ENCODE measurements at regions of chr9 and their contacts with region 1.

Region 1: GRCh38 chr9:95510709-95511615 is 5.8 kb downstream of the PTCH1 start:
- DNase-seq: peak; percentile 51 to 92 (median 81)
- ATAC-seq: peak; percentile 32
- H3K4me3 ChIP-seq: peak overlapping the region; percentile 60 to 72
- H3K4me3 Mint-ChIP-seq: peak overlapping the region; percentile 93
- H3K27ac ChIP-seq: peak overlapping the region; percentile 45
- H3K27ac Mint-ChIP-seq: peak overlapping the region; percentile 79
- H3K4me1 ChIP-seq: peaks cover 26% of the 10 kb centered on the region
- H3K4me1 Mint-ChIP-seq: peaks cover 41% of the 10 kb centered on the region
- H3K27me3 ChIP-seq: no peaks in the 10 kb centered on the region
- H3K27me3 Mint-ChIP-seq: peaks cover 22% of the 10 kb centered on the region
- CTCF ChIP-seq: no peak

Region 2: GRCh38 chr9:95317119-95317892 is 193.7 kb before region 1 on chr9 and contains the start of gene FANCC:
- CTCF ChIA-PET with region 1: no interaction called
- POLR2A ChIA-PET with region 1: no interaction called
- intact Hi-C with region 1: loop called (anchors 1 to 2 kb)
- DNase-seq: peak; percentile 71 to 93 (median 85)
- ATAC-seq: peak; percentile 79
- H3K4me3 ChIP-seq: peak within 1 kb of the TSS; percentile 87 to 99
- H3K4me3 Mint-ChIP-seq: peak within 1 kb of the TSS; percentile 94
- H3K27ac ChIP-seq: peak within 1 kb of the TSS; percentile 75 to 78
- H3K27ac Mint-ChIP-seq: peak within 1 kb of the TSS; percentile 91
- H3K4me1 ChIP-seq: peaks cover 12% of the 10 kb centered on the region
- H3K4me1 Mint-ChIP-seq: peaks cover 22% of the 10 kb centered on the region
- H3K27me3 ChIP-seq: no peaks in the 10 kb centered on the region
- H3K27me3 Mint-ChIP-seq: peaks cover 4% of the 10 kb centered on the region
- CTCF ChIP-seq: no peak
- total RNA-seq, gene FANCC: 4.2 to 6.1 TPM

Region 3: GRCh38 chr9:95726756-95727155 is 215.8 kb after region 1 on chr9:
- CTCF ChIA-PET with region 1: interaction called, 3 read pairs
- POLR2A ChIA-PET with region 1: no interaction called
- intact Hi-C with region 1: loop called (anchors 2 kb)
- DNase-seq: peak in 2 of 9 experiments; percentile 39 to 55
- ATAC-seq: no peak
- H3K4me3 ChIP-seq: no peak overlapping the region
- H3K4me3 Mint-ChIP-seq: no peak overlapping the region
- H3K27ac ChIP-seq: no peak overlapping the region
- H3K27ac Mint-ChIP-seq: no peak overlapping the region
- H3K4me1 ChIP-seq: peaks cover 28% of the 10 kb centered on the region
- H3K4me1 Mint-ChIP-seq: peaks cover 47% of the 10 kb centered on the region
- H3K27me3 ChIP-seq: no peaks in the 10 kb centered on the region
- H3K27me3 Mint-ChIP-seq: peaks cover 2% of the 10 kb centered on the region
- CTCF ChIP-seq: peak; percentile 46

Region 4: DNA sequence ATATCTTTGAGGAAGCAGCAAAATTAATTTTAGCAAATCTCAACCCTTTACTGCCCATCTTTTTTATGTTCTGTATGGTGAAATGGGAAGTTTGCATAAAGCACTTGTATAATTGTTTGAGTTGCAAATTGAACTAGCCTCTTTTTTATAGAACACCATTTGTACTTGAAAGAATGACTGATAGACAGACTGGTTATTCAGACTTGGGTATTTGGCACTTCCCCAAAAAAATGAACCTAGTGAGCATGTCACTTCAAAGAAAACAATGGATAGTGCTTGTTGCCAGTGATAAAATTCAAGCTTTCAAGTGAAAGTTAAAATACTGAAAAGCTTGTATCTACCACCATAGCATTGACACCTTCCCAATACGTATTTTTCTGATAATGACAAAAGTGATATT is 480.4 kb after region 1 on chr9:
- CTCF ChIA-PET with region 1: no interaction called
- POLR2A ChIA-PET with region 1: no interaction called
- intact Hi-C with region 1: no loop called
- DNase-seq: no peak
- ATAC-seq: no peak
- H3K4me3 ChIP-seq: no peak overlapping the region
- H3K4me3 Mint-ChIP-seq: no peak overlapping the region
- H3K27ac ChIP-seq: no peak overlapping the region
- H3K27ac Mint-ChIP-seq: no peak overlapping the region
- H3K4me1 ChIP-seq: no peaks in the 10 kb centered on the region
- H3K4me1 Mint-ChIP-seq: peaks cover 4% of the 10 kb centered on the region
- H3K27me3 ChIP-seq: no peaks in the 10 kb centered on the region
- H3K27me3 Mint-ChIP-seq: no peaks in the 10 kb centered on the region
- CTCF ChIP-seq: no peak

Region 5: GRCh38 chr9:96217754-96218693 is 707.1 kb after region 1 on chr9:
- CTCF ChIA-PET with region 1: no interaction called
- POLR2A ChIA-PET with region 1: no interaction called
- intact Hi-C with region 1: loop called in 1 of 2 experiments (anchors 5 kb)
- DNase-seq: peak; percentile 48 to 88 (median 77)
- ATAC-seq: peak; percentile 81
- H3K4me3 ChIP-seq: peak overlapping the region; percentile 9 to 27
- H3K4me3 Mint-ChIP-seq: peak overlapping the region; percentile 80
- H3K27ac ChIP-seq: no peak overlapping the region
- H3K27ac Mint-ChIP-seq: no peak overlapping the region
- H3K4me1 ChIP-seq: peaks cover 8% of the 10 kb centered on the region
- H3K4me1 Mint-ChIP-seq: peaks cover 12% of the 10 kb centered on the region
- H3K27me3 ChIP-seq: peaks cover 0 to 8% of the 10 kb centered on the region in 2 experiments
- H3K27me3 Mint-ChIP-seq: peaks cover 37% of the 10 kb centered on the region
- CTCF ChIP-seq: peak; percentile 98

Region 6: DNA sequence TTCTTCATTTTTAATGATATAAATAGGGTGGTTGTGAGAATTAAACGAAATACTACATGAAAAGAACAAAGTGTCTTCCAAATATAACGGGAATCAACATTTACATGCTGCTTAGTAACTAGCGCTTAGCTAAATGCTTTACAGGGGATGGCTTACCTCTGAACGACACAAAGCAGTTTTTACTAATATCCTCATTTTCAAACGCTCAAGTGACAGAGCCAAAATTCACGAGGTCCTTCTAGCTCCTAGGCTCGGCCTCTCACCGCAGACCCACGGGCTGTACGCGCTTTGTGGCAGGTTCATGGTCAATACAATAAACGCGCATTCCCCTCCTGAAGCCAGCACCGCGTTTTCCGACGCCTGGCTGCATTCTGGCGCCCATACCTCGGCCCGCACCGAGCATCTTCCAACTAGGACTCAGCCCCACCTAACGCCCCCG is 1266.5 kb after region 1 on chr9:
- CTCF ChIA-PET with region 1: no interaction called
- POLR2A ChIA-PET with region 1: no interaction called
- intact Hi-C with region 1: loop called in 1 of 2 experiments (anchors 10 kb)
- DNase-seq: no peak
- ATAC-seq: no peak
- H3K4me3 ChIP-seq: peak overlapping the region; percentile 54 to 70
- H3K4me3 Mint-ChIP-seq: peak overlapping the region; percentile 97
- H3K27ac ChIP-seq: peak overlapping the region; percentile 76 to 77
- H3K27ac Mint-ChIP-seq: peak overlapping the region; percentile 99
- H3K4me1 ChIP-seq: peaks cover 14% of the 10 kb centered on the region
- H3K4me1 Mint-ChIP-seq: peaks cover 52% of the 10 kb centered on the region
- H3K27me3 ChIP-seq: no peaks in the 10 kb centered on the region
- H3K27me3 Mint-ChIP-seq: no peaks in the 10 kb centered on the region
- CTCF ChIP-seq: no peak